ENCODE measurements at regions of chr5 and their contacts with region 1.

Region 1: DNA sequence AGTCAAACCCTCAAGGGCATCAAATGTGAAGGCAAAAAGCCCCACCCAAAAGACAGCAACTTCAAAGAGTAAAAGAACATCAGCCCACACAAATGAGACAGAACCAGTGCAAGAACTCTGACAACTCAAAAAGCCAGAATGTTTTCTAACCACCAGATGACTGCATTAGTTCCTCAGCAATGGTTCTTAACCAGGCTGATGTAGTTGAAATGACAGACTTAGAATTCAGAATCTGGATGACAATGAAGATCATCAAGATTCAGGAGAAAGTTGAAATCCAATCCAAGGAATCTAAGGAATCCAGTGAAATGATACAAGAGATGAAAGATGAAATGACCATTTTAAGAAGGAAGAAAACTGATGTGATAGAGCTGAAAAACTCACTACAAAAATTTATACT is 339.7 kb downstream of the KIF4B start:
- DNase-seq: no peak
- H3K4me3 ChIP-seq: no peak overlapping the region
- H3K27ac ChIP-seq: no peak overlapping the region
- H3K4me1 ChIP-seq: no peaks in the 10 kb centered on the region
- H3K27me3 ChIP-seq: no peaks in the 10 kb centered on the region
- CTCF ChIP-seq: no peak
- POLR2A ChIP-seq: no peak

Region 2: GRCh38 chr5:155620821-155621410 is 267.7 kb after region 1 on chr5:
- intact Hi-C with region 1: loop called (anchors 5 kb)
- DNase-seq: no peak
- H3K4me3 ChIP-seq: no peak overlapping the region
- H3K27ac ChIP-seq: no peak overlapping the region
- H3K4me1 ChIP-seq: no peaks in the 10 kb centered on the region
- H3K27me3 ChIP-seq: no peaks in the 10 kb centered on the region
- CTCF ChIP-seq: no peak
- POLR2A ChIP-seq: no peak